Breast epithelium (tissue), 4 donors: ENCODE measurements at regions of chr20 and their contacts with region 1.

Region 1: DNA sequence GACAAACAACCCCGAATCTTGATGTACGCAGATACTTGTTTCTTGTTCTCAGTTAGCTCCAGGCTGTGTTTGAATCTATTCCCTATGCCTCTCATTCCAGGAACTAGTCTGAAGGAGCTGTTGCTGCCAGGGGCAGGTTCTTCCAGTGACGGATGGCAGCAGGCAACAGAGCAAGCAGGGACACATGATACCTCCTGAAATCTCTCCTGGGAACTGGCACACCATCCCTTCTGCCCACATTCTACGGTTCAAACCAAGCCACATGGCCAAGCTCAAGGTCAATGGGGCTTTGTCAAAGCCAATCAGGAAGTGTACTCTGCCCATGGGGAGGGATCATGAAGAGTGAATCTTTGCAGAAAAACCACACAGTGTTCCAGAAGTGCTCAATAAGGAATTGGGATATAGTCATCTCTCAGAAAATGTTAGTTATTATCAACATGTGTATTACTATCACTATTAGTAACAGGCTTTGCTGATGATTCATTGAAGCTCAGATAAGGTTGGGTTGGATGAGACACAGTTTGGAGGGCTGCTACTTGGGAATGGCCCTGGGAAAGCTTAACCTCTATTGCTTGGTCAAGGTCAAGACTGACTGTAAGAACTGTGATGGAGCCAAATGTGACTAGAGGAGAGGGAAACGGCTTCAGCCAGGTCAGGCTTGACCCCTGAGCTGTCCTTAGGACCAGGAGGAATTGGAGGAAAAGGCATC is 454.9 kb downstream of the PTPRT start:
- DNase-seq: peak in 1 of 2 donors; percentile 88
- H3K4me3 ChIP-seq: no peak overlapping the region
- H3K27ac ChIP-seq: peak overlapping the region; percentile 71 to 82
- H3K4me1 ChIP-seq: peaks cover 0 to 6% of the 10 kb centered on the region in 2 donors
- H3K27me3 ChIP-seq: no peaks in the 10 kb centered on the region
- CTCF ChIP-seq: no peak
- POLR2A ChIP-seq: no peak

Region 2: DNA sequence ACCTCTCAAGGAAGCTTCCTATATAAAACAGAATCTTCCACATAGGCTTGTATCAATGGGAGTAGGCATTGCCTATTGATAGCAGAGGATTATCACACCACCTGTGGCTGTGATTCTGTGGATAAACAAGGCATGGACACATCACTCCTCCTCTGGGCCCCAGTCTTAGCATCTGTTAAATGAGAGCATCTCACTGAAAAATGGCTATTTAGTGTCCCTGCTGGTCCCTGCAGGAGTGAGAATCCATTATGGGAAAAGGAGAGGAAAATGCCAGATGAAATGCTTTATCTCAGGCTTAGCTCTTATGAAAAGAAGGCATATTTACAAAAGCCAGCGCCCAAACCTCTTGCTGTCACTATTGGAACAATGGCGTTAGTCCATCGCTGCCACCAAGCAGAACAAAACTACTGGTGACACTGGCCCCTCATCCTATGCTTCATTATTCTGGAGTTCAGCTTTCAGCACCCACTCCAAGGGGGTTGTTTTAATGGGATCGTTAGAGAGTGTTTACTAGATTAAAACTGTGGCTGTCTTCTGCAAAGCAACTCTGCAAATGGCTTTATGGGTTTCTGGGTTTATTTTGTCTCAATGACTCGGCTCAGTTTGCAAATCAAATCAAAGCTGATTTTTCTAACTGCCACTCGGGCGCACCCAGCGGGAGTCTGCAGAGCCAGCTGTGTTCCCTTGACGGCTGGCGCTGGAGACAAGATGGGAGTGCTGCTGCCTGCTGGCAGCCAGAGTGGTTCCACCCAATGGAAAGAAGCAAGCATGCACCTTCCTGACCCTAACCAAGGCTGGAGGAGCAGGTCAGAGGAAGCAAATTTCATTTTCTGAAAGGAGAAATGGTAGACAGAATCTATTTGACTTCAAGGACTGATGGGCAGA is 457.9 kb before region 1 on chr20:
- intact Hi-C with region 1: loop called (anchors 10 kb)
- DNase-seq: no peak
- H3K4me3 ChIP-seq: no peak overlapping the region
- H3K27ac ChIP-seq: no peak overlapping the region
- H3K4me1 ChIP-seq: no peaks in the 10 kb centered on the region
- H3K27me3 ChIP-seq: no peaks in the 10 kb centered on the region
- CTCF ChIP-seq: no peak
- POLR2A ChIP-seq: no peak

Region 3: GRCh38 chr20:42701948-42702347 is 32.9 kb before region 1 on chr20:
- intact Hi-C with region 1: no loop called
- DNase-seq: no peak
- H3K4me3 ChIP-seq: no peak overlapping the region
- H3K27ac ChIP-seq: no peak overlapping the region
- H3K4me1 ChIP-seq: no peaks in the 10 kb centered on the region
- H3K27me3 ChIP-seq: no peaks in the 10 kb centered on the region
- CTCF ChIP-seq: no peak
- POLR2A ChIP-seq: no peak

Region 4: DNA sequence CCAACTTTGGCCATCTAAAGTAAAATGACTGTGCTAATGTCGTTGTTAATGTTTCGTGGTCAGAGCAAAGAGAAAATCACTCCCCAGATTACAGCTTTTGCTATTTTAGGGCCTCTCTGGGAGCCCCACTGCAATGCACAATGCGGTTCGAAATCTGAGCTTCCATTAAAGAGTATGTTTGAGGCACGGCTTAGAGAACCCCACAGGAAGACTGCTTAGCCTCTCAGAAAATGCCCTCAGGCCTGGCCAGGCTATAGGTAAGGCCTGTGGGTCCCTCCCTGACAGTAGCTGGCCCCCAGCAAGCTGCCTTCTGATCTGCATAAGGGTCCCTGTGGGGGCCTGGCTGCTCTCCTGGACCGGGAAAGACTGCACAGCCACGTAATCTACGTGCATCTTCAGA is 180.3 kb after region 1 on chr20:
- intact Hi-C with region 1: no loop called
- DNase-seq: no peak
- H3K4me3 ChIP-seq: no peak overlapping the region
- H3K27ac ChIP-seq: no peak overlapping the region
- H3K4me1 ChIP-seq: no peaks in the 10 kb centered on the region
- H3K27me3 ChIP-seq: no peaks in the 10 kb centered on the region
- CTCF ChIP-seq: no peak
- POLR2A ChIP-seq: no peak

Region 5: DNA sequence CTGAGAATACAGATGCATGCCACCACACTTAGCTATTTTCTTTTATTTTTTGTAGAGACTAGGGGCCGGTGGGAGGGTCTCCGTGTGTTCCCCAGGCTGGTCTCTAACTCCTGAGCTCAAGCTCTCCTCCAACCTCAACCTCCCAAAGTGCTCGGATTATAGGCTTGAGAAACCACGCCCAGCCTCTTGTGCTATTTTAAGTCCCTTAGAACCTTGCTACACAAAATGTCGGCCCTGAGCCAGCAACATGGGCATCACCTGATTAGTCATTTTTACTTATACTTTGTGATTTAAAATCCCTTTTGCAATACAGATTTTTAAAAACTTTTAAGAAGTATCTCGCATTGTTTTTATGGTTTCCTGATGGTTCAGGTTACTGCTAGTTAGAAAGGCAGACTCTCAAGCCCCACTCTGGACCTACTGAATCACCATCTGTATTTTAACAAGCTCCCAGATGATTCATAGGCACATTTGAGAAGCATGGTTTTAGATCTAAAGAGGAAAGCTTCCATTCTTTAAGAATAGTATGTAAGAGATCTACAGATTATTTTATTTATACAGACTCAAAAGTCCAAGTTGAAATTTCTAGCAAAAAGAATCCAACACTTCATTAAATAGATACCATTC is 268.6 kb after region 1 on chr20:
- intact Hi-C with region 1: no loop called
- DNase-seq: no peak
- H3K4me3 ChIP-seq: no peak overlapping the region
- H3K27ac ChIP-seq: no peak overlapping the region
- H3K4me1 ChIP-seq: no peaks in the 10 kb centered on the region
- H3K27me3 ChIP-seq: no peaks in the 10 kb centered on the region
- CTCF ChIP-seq: no peak
- POLR2A ChIP-seq: no peak